Aorta (tissue), 5 donors: ENCODE measurements at regions of chr7 and their contacts with region 1.

Region 1: GRCh38 chr7:64463636-64464378 is 99.1 kb downstream of the ZNF680 start:
- DNase-seq: peak; percentile 85 to 90
- ATAC-seq: peak; percentile 94
- H3K4me3 ChIP-seq: peak overlapping the region; percentile 21 to 49
- H3K27ac ChIP-seq: no peak overlapping the region
- H3K4me1 ChIP-seq: no peaks in the 10 kb centered on the region
- H3K27me3 ChIP-seq: no peaks in the 10 kb centered on the region

Region 2: GRCh38 chr7:64562626-64563275 is 98.9 kb after region 1 on chr7 and contains the start of gene ZNF680:
- intact Hi-C with region 1: loop called in 1 of 2 experiments (anchors 10 kb)
- DNase-seq: peak; percentile 97 to 98
- ATAC-seq: peak; percentile 97
- H3K4me3 ChIP-seq: peak within 1 kb of the TSS; percentile 96 to 98
- H3K27ac ChIP-seq: peak within 1 kb of the TSS; percentile 33 to 96
- H3K4me1 ChIP-seq: peaks cover 3 to 5% of the 10 kb centered on the region in 2 donors
- H3K27me3 ChIP-seq: no peaks in the 10 kb centered on the region
- total RNA-seq, gene ZNF680: 23.5 to 35.9 TPM